ENCODE measurements at regions of chr4 and their contacts with region 1.

Region 1: GRCh38 chr4:121977251-121978171 is 25.7 kb upstream of the TRPC3 start:
- DNase-seq: no peak
- H3K4me3 Mint-ChIP-seq: no peak overlapping the region
- H3K27ac Mint-ChIP-seq: no peak overlapping the region
- H3K4me1 Mint-ChIP-seq: peaks cover 5% of the 10 kb centered on the region
- H3K27me3 Mint-ChIP-seq: peaks cover 24% of the 10 kb centered on the region

Region 2: GRCh38 chr4:121696581-121697461 is 280.7 kb before region 1 on chr4 and contains the start of gene ANXA5:
- intact Hi-C with region 1: no loop called
- DNase-seq: peak; percentile 94
- H3K4me3 Mint-ChIP-seq: peak within 1 kb of the TSS; percentile 98
- H3K27ac Mint-ChIP-seq: peak within 1 kb of the TSS; percentile 100
- H3K4me1 Mint-ChIP-seq: peaks cover 39% of the 10 kb centered on the region
- H3K27me3 Mint-ChIP-seq: peaks cover 33% of the 10 kb centered on the region
- total RNA-seq, gene ANXA5: 107 TPM in 2 replicates

Region 3: GRCh38 chr4:122007016-122007415 is 29.5 kb after region 1 on chr4:
- intact Hi-C with region 1: loop called (anchors 1 kb)
- DNase-seq: no peak
- H3K4me3 Mint-ChIP-seq: no peak overlapping the region
- H3K27ac Mint-ChIP-seq: no peak overlapping the region
- H3K4me1 Mint-ChIP-seq: peaks cover 8% of the 10 kb centered on the region
- H3K27me3 Mint-ChIP-seq: peaks cover 16% of the 10 kb centered on the region